ENCODE measurements at regions of chr10 and their contacts with region 1.

Region 1: GRCh38 chr10:104406715-104407650 is 53.4 kb downstream of the CFAP58 start:
- DNase-seq: no peak
- H3K4me3 ChIP-seq: no peak overlapping the region
- H3K27ac ChIP-seq: no peak overlapping the region
- H3K4me1 ChIP-seq: peaks cover 0 to 2% (median 0%) of the 10 kb centered on the region in 4 experiments; a peak in 2 of 7 replicates
- H3K27me3 ChIP-seq: peaks cover 0 to 1% (median 0%) of the 10 kb centered on the region in 4 experiments; a peak in 1 of 7 replicates
- CTCF ChIP-seq: peak in 2 of 3 experiments; percentile 62 to 71; a peak in 2 of 4 replicates
- EP300 ChIP-seq: no peak
- POLR2A ChIP-seq: no peak
- RAD21 ChIP-seq: peak; percentile 87 to 90

Region 2: GRCh38 chr10:104393387-104393786 is 13.6 kb before region 1 on chr10:
- CTCF ChIA-PET with region 1: interaction called, 11 read pairs
- POLR2A ChIA-PET with region 1: no interaction called
- DNase-seq: no peak
- H3K4me3 ChIP-seq: no peak overlapping the region
- H3K27ac ChIP-seq: no peak overlapping the region
- H3K4me1 ChIP-seq: no peaks in the 10 kb centered on the region; a peak in 1 of 7 replicates
- H3K27me3 ChIP-seq: no peaks in the 10 kb centered on the region; a peak in 1 of 7 replicates
- CTCF ChIP-seq: no peak
- EP300 ChIP-seq: no peak
- POLR2A ChIP-seq: no peak
- RAD21 ChIP-seq: peak in 1 of 2 experiments; percentile 12; a peak in 1 of 4 replicates

Region 3: GRCh38 chr10:104417637-104418296 is 10.8 kb after region 1 on chr10:
- CTCF ChIA-PET with region 1: interaction called, 15 read pairs
- POLR2A ChIA-PET with region 1: interaction called, 3 read pairs
- DNase-seq: no peak
- H3K4me3 ChIP-seq: no peak overlapping the region
- H3K27ac ChIP-seq: no peak overlapping the region
- H3K4me1 ChIP-seq: peaks cover 0 to 10% (median 3%) of the 10 kb centered on the region in 4 experiments; a peak in 4 of 7 replicates
- H3K27me3 ChIP-seq: no peaks in the 10 kb centered on the region
- CTCF ChIP-seq: no peak
- EP300 ChIP-seq: no peak
- POLR2A ChIP-seq: no peak
- RAD21 ChIP-seq: no peak

Region 4: GRCh38 chr10:104424719-104425118 is 17.7 kb after region 1 on chr10:
- CTCF ChIA-PET with region 1: interaction called, 11 read pairs
- POLR2A ChIA-PET with region 1: no interaction called
- DNase-seq: no peak
- H3K4me3 ChIP-seq: no peak overlapping the region
- H3K27ac ChIP-seq: no peak overlapping the region
- H3K4me1 ChIP-seq: peaks cover 0 to 6% (median 2%) of the 10 kb centered on the region in 4 experiments; a peak in 4 of 7 replicates
- H3K27me3 ChIP-seq: no peaks in the 10 kb centered on the region
- CTCF ChIP-seq: no peak
- EP300 ChIP-seq: no peak
- POLR2A ChIP-seq: no peak
- RAD21 ChIP-seq: no peak

Region 5: GRCh38 chr10:104456802-104457542 is 50.0 kb after region 1 on chr10:
- CTCF ChIA-PET with region 1: no interaction called
- POLR2A ChIA-PET with region 1: no interaction called
- DNase-seq: no peak
- H3K4me3 ChIP-seq: no peak overlapping the region
- H3K27ac ChIP-seq: no peak overlapping the region
- H3K4me1 ChIP-seq: no peaks in the 10 kb centered on the region
- H3K27me3 ChIP-seq: no peaks in the 10 kb centered on the region
- CTCF ChIP-seq: no peak
- EP300 ChIP-seq: no peak
- POLR2A ChIP-seq: no peak
- RAD21 ChIP-seq: no peak

Region 6: DNA sequence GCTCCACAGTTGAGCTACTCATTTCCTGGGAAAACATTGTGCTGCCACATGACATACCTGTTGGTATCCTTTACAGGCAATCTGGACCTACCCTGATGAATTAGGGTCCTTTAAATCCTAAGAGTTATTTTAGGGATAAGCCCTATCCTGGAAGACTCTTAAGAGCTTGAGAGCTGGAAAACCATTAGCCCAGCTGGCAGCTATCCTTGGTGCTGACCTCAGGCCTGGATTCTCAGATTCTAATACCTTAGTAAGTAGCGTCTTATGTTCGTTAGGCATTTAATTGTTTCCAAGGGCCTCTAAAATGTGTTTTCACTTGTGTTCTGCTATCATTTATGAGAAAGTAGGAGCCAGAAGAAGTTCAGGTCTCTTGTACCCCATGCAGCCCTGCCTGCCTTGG is 141.1 kb after region 1 on chr10:
- CTCF ChIA-PET with region 1: interaction called, 27 read pairs
- POLR2A ChIA-PET with region 1: no interaction called
- DNase-seq: peak; percentile 5 to 54
- H3K4me3 ChIP-seq: no peak overlapping the region
- H3K27ac ChIP-seq: no peak overlapping the region
- H3K4me1 ChIP-seq: peaks cover 0 to 3% (median 1%) of the 10 kb centered on the region in 4 experiments; a peak in 3 of 7 replicates
- H3K27me3 ChIP-seq: no peaks in the 10 kb centered on the region
- CTCF ChIP-seq: no peak
- EP300 ChIP-seq: no peak
- POLR2A ChIP-seq: no peak
- RAD21 ChIP-seq: no peak

Region 7: DNA sequence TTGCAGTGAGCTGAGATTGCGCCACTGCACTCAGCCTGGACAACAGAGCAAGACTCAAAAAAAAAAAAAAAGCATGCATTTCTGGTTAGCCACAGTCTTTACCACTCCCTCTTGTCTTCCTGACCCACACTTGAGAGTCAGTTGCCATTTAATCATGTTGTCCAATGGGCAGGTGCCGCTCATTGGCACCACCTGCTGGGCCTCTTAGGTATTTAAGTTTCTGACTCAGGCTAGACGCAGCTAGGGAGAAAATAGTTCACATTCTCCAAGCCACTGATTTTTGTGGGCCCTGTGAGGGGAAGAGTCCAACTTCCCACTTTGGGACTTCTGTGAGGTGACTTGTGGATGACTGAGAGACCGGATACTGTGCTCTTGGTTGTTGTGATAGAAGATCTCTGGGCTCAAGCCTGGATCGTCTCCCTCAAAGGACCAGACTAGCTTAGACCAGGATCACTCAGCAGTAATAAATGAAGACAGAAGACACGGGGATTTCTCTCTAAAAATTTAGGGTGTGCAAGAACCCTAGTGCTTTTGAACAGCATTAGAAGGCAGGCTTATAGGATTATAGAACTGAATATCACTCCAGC is 207.4 kb after region 1 on chr10:
- CTCF ChIA-PET with region 1: interaction called, 74 read pairs
- POLR2A ChIA-PET with region 1: no interaction called
- DNase-seq: peak in 1 of 2 experiments; percentile 82
- H3K4me3 ChIP-seq: no peak overlapping the region
- H3K27ac ChIP-seq: no peak overlapping the region
- H3K4me1 ChIP-seq: no peaks in the 10 kb centered on the region
- H3K27me3 ChIP-seq: no peaks in the 10 kb centered on the region
- CTCF ChIP-seq: peak; percentile 49 to 71 (median 66)
- EP300 ChIP-seq: no peak
- POLR2A ChIP-seq: no peak
- RAD21 ChIP-seq: peak; percentile 56 to 71

Region 8: GRCh38 chr10:104622598-104623209 is 215.7 kb after region 1 on chr10:
- CTCF ChIA-PET with region 1: interaction called, 74 read pairs
- POLR2A ChIA-PET with region 1: no interaction called
- DNase-seq: peak in 1 of 2 experiments; percentile 60
- H3K4me3 ChIP-seq: no peak overlapping the region
- H3K27ac ChIP-seq: no peak overlapping the region
- H3K4me1 ChIP-seq: no peaks in the 10 kb centered on the region
- H3K27me3 ChIP-seq: no peaks in the 10 kb centered on the region
- CTCF ChIP-seq: peak; percentile 88 to 95 (median 91)
- EP300 ChIP-seq: no peak
- POLR2A ChIP-seq: no peak
- RAD21 ChIP-seq: peak; percentile 98 to 99